ENCODE measurements at regions of chr17 and their contacts with region 1.

Region 1: GRCh38 chr17:63919311-63919723 is 678 bp upstream of the GH1 start:
- DNase-seq: no peak
- ATAC-seq: peak; percentile 87

Region 2: DNA sequence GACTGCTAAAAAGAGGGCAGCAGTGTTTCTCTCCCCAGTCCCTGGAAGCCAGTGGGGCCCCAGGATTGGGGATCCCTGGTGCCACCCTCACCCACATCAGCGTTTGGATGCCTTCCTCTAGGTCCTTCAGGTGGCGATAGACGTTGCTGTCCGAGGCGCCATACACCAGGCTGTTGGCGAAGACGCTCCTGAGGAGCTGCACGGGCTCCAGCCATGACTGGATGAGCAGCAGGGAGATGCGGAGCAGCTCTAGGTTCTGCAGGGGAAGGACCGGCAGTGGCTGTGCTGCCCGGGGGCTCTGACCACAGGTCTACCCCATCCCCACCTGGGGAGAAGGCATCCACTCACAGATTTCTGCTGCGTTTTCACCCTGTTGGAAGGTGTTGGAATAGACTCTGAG is 38.6 kb before region 1 on chr17:
- intact Hi-C with region 1: no loop called
- DNase-seq: no peak
- ATAC-seq: no peak

Region 3: DNA sequence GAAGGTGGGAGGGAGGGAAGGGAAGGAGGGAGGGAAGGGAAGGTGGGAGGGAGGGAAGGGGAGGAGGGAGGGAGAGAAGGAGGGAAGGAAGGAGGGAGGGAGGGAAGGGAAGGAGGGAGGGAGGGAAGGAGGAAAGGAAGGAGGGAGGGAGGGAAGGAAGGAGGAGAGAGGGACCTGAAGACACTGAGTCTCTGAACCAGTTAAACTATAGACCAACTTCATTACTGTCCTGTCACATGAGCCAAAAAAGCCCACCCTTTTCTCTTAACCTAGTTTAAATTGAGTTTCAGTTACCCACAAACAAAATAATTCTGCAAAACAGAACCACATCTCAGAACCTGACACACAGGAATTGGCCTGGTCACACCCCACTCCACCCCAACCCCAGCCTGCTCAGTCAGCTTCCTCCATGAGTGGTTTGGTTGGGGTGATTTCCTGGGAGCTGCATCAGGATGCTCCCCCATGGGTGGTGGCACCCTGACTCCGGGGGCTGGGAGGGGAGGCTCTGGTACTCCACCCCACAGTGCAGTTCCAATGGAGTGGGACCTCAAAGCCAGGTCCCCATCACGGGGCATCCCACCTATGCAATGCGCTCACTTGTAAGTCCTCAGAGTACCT is 74.2 kb after region 1 on chr17:
- intact Hi-C with region 1: loop called (anchors 5 kb)
- DNase-seq: peak; percentile 26
- ATAC-seq: no peak

Region 4: GRCh38 chr17:64025732-64026294 is 106.5 kb after region 1 on chr17:
- intact Hi-C with region 1: loop called (anchors 10 kb)
- DNase-seq: peak; percentile 87
- ATAC-seq: peak; percentile 83

Region 5: DNA sequence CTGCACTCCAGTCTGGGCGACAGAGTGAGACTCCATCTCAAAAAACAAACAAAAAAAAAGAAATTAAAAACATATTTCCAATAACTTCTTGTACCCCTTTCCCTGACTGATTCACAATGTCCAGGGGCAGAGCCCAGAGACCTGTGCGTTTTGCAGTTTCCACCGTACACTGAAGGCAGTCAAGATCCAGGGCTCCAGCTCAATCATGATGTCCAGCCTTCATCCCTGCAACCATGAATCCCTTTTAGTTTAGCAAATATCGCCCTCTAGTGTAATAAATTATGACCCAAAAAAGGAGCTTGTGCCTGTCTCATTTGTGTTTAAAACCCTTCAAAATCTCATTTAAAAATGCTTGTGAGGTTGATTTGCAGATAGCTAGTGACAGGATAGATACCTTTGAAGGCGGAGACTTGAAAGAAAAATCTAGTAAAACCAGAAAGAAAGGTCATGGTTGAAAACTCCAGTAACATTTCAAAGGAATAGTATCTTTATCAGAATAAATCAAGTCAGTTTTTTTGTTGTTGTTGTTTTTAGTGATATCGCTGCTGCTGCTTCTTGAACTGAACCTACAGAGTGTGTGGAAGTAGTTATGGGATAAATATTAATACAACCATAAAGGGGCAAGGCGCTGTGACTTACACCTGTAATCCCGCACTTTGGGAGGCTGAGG is 214.4 kb after region 1 on chr17:
- intact Hi-C with region 1: loop called (anchors 5 kb)
- DNase-seq: no peak
- ATAC-seq: no peak

Measured in Right ventricle myocardium superior (tissue), 1 donor.